Calu3 (cell line): ENCODE measurements at regions of chr12 and their contacts with region 1.

Region 1: GRCh38 chr12:120580787-120581723 is at the start of gene POP5:
- DNase-seq: peak; percentile 97
- H3K4me3 Mint-ChIP-seq: peak within 1 kb of the TSS; percentile 96
- H3K27ac Mint-ChIP-seq: peak within 1 kb of the TSS; percentile 92
- H3K4me1 Mint-ChIP-seq: peaks cover 17% of the 10 kb centered on the region
- H3K27me3 Mint-ChIP-seq: peaks cover 6% of the 10 kb centered on the region
- CTCF ChIP-seq: no peak
- total RNA-seq, gene POP5: 81.0 and 84.4 TPM in 2 replicates

Region 2: DNA sequence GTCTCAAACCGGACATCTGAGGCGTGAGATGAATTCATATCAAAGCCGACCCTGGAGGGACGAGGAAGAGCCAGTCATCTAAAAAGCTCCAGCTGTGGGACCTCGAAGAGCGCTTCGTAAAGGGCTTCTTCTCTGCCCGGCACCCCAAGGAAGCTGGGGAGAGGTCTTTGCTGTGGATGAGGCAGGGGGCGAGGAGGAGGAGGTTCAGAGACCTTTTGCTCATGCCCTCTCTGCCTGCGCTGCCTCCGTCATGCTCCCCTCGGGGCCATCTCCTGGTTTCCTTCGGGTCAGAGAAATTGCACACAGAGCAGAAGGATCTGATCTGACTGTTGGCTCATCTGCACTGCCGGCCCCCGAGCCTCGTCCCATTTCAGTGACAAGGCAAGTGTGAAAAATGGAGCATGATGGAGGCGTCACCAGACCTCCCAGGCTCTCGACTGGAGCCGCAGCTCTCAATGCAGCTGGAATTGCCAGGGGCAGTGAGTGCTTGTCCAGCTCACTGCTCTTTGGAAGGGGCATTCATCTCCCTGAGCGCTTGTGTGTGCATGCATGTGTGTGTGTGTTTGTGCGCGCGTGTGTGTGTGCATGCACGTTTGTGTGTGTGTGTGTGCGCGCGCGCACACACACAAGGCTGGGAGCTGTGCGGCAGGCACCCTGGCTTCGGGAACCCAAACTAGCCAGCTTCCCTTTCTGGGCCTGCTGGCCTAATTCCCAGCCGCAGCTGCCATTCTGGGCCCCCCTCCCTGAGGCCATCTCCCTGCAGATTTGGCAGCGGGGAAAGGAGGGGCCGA is 68.6 kb after region 1 on chr12:
- CTCF ChIA-PET with region 1: interaction called, 52 read pairs
- intact Hi-C with region 1: loop called (anchors 1 kb)
- DNase-seq: no peak
- H3K4me3 Mint-ChIP-seq: no peak overlapping the region
- H3K27ac Mint-ChIP-seq: no peak overlapping the region
- H3K4me1 Mint-ChIP-seq: peaks cover 17% of the 10 kb centered on the region
- H3K27me3 Mint-ChIP-seq: peaks cover 99% of the 10 kb centered on the region
- CTCF ChIP-seq: peak; percentile 52

Region 3: GRCh38 chr12:120710031-120710804 is 129.2 kb after region 1 on chr12 and contains the start of gene UNC119B:
- CTCF ChIA-PET with region 1: no interaction called
- intact Hi-C with region 1: loop called (anchors 1 kb)
- DNase-seq: peak; percentile 83
- H3K4me3 Mint-ChIP-seq: peak within 1 kb of the TSS; percentile 94
- H3K27ac Mint-ChIP-seq: peak within 1 kb of the TSS; percentile 85
- H3K4me1 Mint-ChIP-seq: peaks cover 35% of the 10 kb centered on the region
- H3K27me3 Mint-ChIP-seq: no peaks in the 10 kb centered on the region
- CTCF ChIP-seq: no peak
- total RNA-seq, gene UNC119B: 31.6 and 33.5 TPM in 2 replicates

Region 4: DNA sequence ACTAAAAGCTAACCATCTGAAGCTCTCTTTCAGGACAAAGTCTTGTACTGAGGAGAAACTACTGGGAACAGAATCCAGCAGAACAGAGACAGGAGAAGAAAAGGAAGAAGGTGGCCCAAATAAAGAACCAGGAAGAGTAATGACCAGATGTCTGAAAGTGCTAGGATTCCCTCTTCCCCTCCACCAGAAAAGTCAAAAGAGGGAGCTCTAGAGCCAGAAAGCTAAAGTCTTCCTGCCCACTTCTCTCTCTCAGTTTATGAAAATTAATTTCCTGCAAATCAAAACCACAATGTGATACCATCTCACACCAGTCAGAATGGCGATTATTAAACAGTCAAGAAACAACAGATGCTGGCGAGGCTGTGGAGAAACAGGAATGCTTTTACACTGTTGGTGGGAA is 275.9 kb after region 1 on chr12:
- CTCF ChIA-PET with region 1: interaction called, 3 read pairs
- intact Hi-C with region 1: loop called (anchors 5 kb)
- DNase-seq: peak; percentile 45
- H3K4me3 Mint-ChIP-seq: no peak overlapping the region
- H3K27ac Mint-ChIP-seq: peak overlapping the region; percentile 51
- H3K4me1 Mint-ChIP-seq: peaks cover 27% of the 10 kb centered on the region
- H3K27me3 Mint-ChIP-seq: no peaks in the 10 kb centered on the region
- CTCF ChIP-seq: peak; percentile 45

Region 5: GRCh38 chr12:120971299-120972179 is 390.5 kb after region 1 on chr12:
- CTCF ChIA-PET with region 1: interaction called, 5 read pairs
- intact Hi-C with region 1: loop called (anchors 10 kb)
- DNase-seq: no peak
- H3K4me3 Mint-ChIP-seq: no peak overlapping the region
- H3K27ac Mint-ChIP-seq: peak overlapping the region; percentile 27
- H3K4me1 Mint-ChIP-seq: peaks cover 19% of the 10 kb centered on the region
- H3K27me3 Mint-ChIP-seq: no peaks in the 10 kb centered on the region
- CTCF ChIP-seq: peak; percentile 38

Region 6: GRCh38 chr12:121110211-121110940 is 529.3 kb after region 1 on chr12:
- CTCF ChIA-PET with region 1: no interaction called
- intact Hi-C with region 1: loop called (anchors 1 kb)
- DNase-seq: peak; percentile 72
- H3K4me3 Mint-ChIP-seq: no peak overlapping the region
- H3K27ac Mint-ChIP-seq: peak overlapping the region; percentile 13
- H3K4me1 Mint-ChIP-seq: peaks cover 7% of the 10 kb centered on the region
- H3K27me3 Mint-ChIP-seq: no peaks in the 10 kb centered on the region
- CTCF ChIP-seq: peak; percentile 94